Breast epithelium (tissue), 4 donors: ENCODE measurements at regions of chr10 and their contacts with region 1.

Region 1: DNA sequence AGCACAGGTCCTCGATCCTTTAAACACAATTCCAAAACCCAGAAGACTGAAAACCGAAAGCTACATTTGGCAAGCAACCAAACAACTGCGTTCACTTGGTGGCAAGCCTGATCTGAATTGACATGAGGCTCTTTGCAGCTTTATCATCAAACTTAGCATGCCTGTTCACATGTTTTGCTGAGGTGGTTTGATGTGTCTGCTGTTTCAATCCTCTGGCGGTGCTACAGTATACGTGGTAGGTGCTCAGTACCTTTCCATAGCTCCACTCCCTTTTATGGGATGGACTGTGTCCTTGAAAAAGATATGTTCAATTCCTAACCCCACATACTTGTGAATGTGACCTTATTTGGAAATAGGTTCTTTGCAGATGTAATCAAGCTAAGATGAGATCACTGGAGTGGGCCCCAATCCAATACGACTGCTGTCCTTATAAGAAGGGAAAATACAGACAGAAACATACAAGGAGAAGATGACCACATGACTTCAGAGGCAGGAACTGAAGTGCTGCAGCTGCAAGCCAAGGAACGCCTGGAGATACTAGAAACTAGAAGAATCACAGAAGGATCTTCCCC is 33.4 kb downstream of the CCDC6 start:
- DNase-seq: peak; percentile 57 to 91
- H3K4me3 ChIP-seq: peak overlapping the region in 2 of 3 donors; percentile 9 to 34
- H3K27ac ChIP-seq: peak overlapping the region; percentile 78 to 79
- H3K4me1 ChIP-seq: no peaks in the 10 kb centered on the region
- H3K27me3 ChIP-seq: no peaks in the 10 kb centered on the region
- CTCF ChIP-seq: no peak
- POLR2A ChIP-seq: no peak

Region 2: DNA sequence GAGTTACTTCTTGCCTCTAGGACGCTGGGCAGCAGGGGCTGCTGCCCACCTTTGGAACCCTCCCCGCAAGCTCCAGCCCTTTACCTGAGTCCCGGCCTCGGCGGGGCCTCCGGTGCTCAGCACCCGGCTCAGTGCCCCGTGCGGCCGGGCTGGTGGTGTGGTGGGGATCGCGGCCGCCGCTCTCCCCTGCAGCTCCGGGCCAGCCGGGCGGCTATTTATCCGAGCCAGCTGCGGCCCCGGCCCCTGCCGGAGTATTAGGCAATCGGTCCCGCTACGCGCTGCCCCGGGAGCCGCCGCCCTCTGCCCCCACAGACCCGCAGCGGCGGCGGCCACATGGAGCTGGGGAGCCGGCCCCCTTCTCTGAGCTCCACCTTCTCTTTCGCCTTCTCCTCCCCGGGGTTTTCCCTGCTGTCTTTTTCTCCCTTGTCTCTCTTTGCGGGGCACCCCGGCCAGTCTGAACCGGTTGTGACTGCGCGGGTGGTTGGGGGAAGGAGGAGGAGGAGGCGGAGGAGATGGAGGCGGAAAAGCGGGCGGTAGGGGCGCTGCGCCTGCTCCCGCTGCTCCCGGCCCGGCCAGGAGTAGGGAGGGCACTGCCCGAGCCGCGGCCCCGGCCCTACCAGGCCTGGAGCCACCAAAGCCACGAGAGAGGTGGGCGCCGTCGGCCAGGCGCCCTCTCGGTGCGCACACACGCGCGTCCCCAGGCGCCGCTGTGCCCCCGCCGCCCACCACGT is 163.4 kb before region 1 on chr10 and contains the start of gene SLC16A9:
- intact Hi-C with region 1: no loop called
- DNase-seq: peak; percentile 19 to 56
- H3K4me3 ChIP-seq: peak within 1 kb of the TSS; percentile 49 to 85 (median 63)
- H3K27ac ChIP-seq: peak within 1 kb of the TSS; percentile 33 to 73
- H3K4me1 ChIP-seq: peaks cover 0 to 3% of the 10 kb centered on the region in 2 donors
- H3K27me3 ChIP-seq: no peaks in the 10 kb centered on the region
- CTCF ChIP-seq: peak in 1 of 3 donors; percentile 18
- POLR2A ChIP-seq: no peak
- total RNA-seq, gene SLC16A9: 0.32 to 1.2 (median 0.33) TPM

Region 3: GRCh38 chr10:59898125-59898835 is 25.3 kb after region 1 on chr10:
- intact Hi-C with region 1: loop called (anchors 2 kb)
- DNase-seq: no peak
- H3K4me3 ChIP-seq: no peak overlapping the region
- H3K27ac ChIP-seq: no peak overlapping the region
- H3K4me1 ChIP-seq: peaks cover 0 to 25% of the 10 kb centered on the region in 2 donors
- H3K27me3 ChIP-seq: no peaks in the 10 kb centered on the region
- CTCF ChIP-seq: no peak
- POLR2A ChIP-seq: no peak

Region 4: GRCh38 chr10:59945664-59946390 is 72.8 kb after region 1 on chr10:
- intact Hi-C with region 1: no loop called
- DNase-seq: no peak
- H3K4me3 ChIP-seq: no peak overlapping the region
- H3K27ac ChIP-seq: no peak overlapping the region
- H3K4me1 ChIP-seq: no peaks in the 10 kb centered on the region
- H3K27me3 ChIP-seq: no peaks in the 10 kb centered on the region
- CTCF ChIP-seq: no peak
- POLR2A ChIP-seq: no peak